ENCODE measurements at regions of chr2 and their contacts with region 1.

Region 1: GRCh38 chr2:234496835-234497591 is at the start of gene ARL4C:
- DNase-seq: peak; percentile 75
- ATAC-seq: peak; percentile 87
- total RNA-seq, gene ARL4C: 2.9 TPM

Region 2: DNA sequence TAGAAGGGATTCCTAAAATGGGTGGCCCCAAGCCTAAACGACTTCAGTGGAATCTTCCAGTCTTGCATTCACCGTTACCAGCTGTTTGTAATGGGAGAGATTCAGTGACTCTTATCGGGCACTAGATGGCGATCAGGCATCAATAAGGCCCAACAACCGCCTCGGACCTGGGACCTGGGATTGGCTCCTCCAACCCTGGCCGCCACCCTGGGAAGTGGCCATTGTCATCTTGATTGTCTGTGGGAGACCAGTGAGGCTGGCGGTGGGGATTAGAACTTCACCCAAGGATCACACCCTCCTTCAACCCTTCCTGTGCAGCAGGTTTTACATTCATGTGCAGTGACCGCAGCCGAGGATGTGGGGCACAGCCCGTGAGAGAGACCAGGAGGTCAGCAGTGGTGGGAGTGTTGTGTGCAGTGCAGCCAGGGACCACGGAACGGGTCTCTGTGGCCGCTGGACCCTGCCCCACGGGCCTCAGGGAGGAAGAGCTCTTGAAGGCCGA is 361.2 kb before region 1 on chr2:
- intact Hi-C with region 1: loop called (anchors 2 kb)
- DNase-seq: peak; percentile 54
- ATAC-seq: peak; percentile 68

Region 3: GRCh38 chr2:234288974-234289455 is 208.0 kb before region 1 on chr2:
- intact Hi-C with region 1: loop called (anchors 2 kb)
- DNase-seq: peak; percentile 69
- ATAC-seq: peak; percentile 55

Region 4: GRCh38 chr2:234446404-234447076 is 50.5 kb before region 1 on chr2:
- intact Hi-C with region 1: no loop called
- DNase-seq: peak; percentile 78
- ATAC-seq: peak; percentile 82

Region 5: DNA sequence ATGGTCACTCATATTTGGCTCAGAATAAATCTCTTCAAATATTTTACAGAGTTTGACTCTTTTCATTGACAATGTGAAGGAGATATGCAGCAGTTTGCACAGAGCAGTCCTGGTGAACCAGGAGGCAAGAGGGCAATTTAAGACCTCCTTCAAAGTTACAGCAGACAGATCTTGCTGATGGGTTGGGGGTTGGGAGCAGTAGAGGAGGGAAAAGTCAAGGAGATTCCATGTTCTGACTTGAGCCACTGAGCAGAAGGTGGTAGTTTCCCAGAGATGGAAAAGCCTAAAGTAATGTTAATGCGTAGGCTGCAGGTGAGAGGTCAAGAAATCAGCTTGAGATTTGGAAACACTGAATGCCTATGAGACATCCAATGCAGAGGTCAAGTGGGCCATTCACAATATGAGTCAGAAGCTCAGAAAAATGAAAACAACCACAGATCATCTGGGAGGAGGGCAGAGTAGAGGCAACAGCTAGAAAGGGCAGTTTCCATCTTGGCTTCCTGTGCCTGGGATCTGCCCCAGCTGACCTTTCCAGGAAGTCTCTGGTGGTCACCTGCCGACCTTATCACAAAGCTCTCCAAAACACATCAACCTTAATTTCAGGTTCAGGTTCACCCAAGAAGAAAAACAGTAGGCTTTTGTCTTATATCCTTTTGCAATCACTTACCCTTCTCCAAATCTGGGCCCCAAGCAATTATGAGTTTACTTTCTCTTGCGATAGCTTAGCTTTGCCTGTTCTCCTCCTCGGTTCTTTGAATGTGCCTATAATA is 197.4 kb after region 1 on chr2:
- intact Hi-C with region 1: no loop called
- DNase-seq: no peak
- ATAC-seq: no peak